H1 (cell line): ENCODE measurements at regions of chr3 and their contacts with region 1.

Region 1: DNA sequence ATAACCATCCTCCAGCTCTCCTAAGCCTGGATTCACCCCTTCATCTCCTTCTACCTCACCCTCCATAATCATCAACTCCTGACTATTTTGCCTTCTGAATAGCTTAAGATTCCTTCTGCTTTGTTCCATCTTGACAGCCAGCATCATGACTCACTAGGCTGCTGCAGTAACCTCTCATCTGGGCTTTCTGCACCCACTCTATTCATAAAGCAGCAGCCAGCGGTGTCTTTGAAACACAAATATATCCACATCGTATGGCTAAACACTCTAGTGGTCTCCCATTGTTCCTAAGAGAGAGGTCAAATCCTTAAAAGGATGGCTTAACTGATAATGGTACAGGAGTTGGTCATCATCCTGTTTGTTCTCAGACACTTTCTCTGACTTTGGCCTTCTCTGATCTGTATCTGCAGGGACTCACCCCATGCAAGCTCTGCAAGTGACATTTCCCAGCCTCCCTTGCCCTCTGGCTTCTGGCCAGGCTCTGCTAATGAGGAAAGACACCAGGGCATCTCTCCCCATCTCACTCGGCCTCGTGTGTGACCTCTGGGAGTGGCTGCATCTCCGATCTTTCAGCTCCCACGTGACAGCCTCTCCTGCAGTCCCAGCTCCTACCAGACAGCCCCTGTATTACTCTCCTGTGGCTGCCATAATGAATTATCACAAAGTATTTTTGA is 6.2 kb downstream of the GRK7 start:
- DNase-seq: no peak
- H3K4me3 ChIP-seq: no peak overlapping the region
- H3K27ac ChIP-seq: no peak overlapping the region
- H3K4me1 ChIP-seq: no peaks in the 10 kb centered on the region
- H3K27me3 ChIP-seq: no peaks in the 10 kb centered on the region
- CTCF ChIP-seq: no peak
- EP300 ChIP-seq: no peak
- POLR2A ChIP-seq: no peak
- RAD21 ChIP-seq: no peak

Region 2: GRCh38 chr3:141782454-141782853 is 13.1 kb after region 1 on chr3:
- CTCF ChIA-PET with region 1: interaction called, 11 read pairs
- POLR2A ChIA-PET with region 1: no interaction called
- DNase-seq: no peak
- H3K4me3 ChIP-seq: no peak overlapping the region
- H3K27ac ChIP-seq: no peak overlapping the region
- H3K4me1 ChIP-seq: no peaks in the 10 kb centered on the region
- H3K27me3 ChIP-seq: no peaks in the 10 kb centered on the region; a peak in 1 of 7 replicates
- CTCF ChIP-seq: peak; percentile 33 to 52 (median 43)
- EP300 ChIP-seq: no peak
- POLR2A ChIP-seq: no peak
- RAD21 ChIP-seq: peak; percentile 59 to 71

Region 3: DNA sequence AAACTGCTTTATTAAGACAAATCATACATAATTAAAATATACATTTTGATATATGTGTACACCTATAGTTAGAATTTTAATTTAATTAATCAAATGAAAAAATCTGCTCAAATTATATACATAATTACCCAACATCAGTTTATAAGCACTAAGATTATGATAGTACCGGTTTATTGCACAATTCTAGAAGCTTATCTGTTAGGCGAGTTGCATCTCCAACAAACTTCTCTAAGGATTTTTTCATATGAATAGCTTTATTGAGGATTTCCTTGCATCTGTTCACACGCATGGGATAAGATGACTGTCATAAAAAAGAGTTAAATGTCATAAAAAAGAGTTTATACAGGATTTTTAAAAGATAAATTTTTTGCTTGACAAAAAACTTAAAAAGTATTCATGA is 698.4 kb after region 1 on chr3:
- CTCF ChIA-PET with region 1: no interaction called
- POLR2A ChIA-PET with region 1: no interaction called
- DNase-seq: no peak
- H3K4me3 ChIP-seq: no peak overlapping the region
- H3K27ac ChIP-seq: no peak overlapping the region
- H3K4me1 ChIP-seq: no peaks in the 10 kb centered on the region
- H3K27me3 ChIP-seq: no peaks in the 10 kb centered on the region
- CTCF ChIP-seq: no peak
- EP300 ChIP-seq: no peak
- POLR2A ChIP-seq: no peak
- RAD21 ChIP-seq: no peak